Pancreas (tissue), 10 donors: ENCODE measurements at regions of chr5 and their contacts with region 1.

Region 1: DNA sequence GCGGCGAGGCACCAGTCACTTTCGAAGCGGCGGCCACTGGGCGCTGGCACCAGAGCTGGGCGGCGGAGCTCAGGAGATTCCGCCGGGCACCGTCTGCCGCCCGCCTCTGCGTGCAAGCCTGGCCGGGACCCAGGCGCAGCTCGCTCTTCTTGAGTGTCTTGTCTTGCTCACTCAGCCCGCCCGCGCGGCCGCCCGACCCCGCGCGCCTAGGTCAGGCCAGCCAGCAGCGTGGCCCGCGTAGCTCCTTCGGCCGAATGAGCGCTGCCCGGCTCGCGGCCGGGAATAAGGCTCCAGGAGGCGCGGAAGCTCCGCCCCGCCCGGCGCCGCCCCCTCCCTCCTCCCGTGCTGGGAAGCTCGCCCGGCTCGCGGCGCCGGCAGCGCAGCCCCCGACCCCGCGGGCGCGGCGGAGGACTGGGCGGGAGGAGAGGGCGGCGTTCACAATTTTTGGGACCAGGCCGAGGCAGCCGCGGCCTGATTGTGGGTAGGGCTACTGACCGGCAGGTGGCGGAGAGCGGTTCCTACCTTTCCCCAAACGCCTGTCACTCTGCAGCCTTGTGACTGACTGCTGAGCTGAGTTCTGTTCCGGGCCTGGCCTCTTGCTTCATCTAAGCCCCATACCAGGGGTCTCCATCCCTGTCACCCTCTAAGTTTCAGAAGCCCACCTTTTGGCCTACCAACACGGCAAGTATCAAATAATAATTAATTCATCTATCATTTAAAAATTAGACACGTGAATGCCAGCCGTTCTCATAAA is at the start of gene HBEGF:
- DNase-seq: peak; percentile 83 to 95 (median 91)
- ATAC-seq: peak; percentile 87 to 92 (median 90)
- H3K4me3 ChIP-seq: peak within 1 kb of the TSS; percentile 55 to 79 (median 63)
- H3K27ac ChIP-seq: peak within 1 kb of the TSS; percentile 53 to 76 (median 68)
- H3K4me1 ChIP-seq: peaks cover 0 to 18% (median 16%) of the 10 kb centered on the region in 3 donors
- H3K27me3 ChIP-seq: no peaks in the 10 kb centered on the region
- CTCF ChIP-seq: peak; percentile 17 to 55 (median 43)
- total RNA-seq, gene HBEGF: 0.97 to 5.0 (median 1.7) TPM

Region 2: DNA sequence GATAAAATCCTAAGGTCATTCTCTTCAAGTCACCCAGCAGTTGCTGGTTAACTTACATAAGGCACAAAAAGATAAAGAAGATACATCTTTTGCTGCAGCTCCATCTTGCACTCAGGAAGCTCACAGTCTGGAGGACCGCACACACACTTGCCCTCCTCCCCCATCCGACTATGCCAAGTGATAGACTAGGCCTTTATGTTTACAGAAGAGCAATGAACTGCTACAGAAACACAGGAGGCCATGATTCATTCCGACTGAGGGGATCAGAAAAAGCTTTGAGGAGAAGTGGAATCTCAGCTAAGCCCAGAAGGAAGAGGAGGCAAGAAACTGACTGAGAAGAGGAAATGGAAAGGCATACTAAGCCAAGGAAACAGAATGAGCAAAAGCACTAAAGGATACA is 320.8 kb before region 1 on chr5:
- intact Hi-C with region 1: no loop called
- DNase-seq: no peak
- ATAC-seq: no peak
- H3K4me3 ChIP-seq: no peak overlapping the region
- H3K27ac ChIP-seq: no peak overlapping the region
- H3K4me1 ChIP-seq: peaks cover 3 to 14% (median 11%) of the 10 kb centered on the region in 3 donors
- H3K27me3 ChIP-seq: no peaks in the 10 kb centered on the region
- CTCF ChIP-seq: no peak

Region 3: GRCh38 chr5:140174465-140175366 is 171.8 kb before region 1 on chr5 and contains the start of gene CYSTM1:
- intact Hi-C with region 1: loop called in 1 of 3 experiments (anchors 5 kb)
- DNase-seq: peak; percentile 96 to 99 (median 99)
- ATAC-seq: peak; percentile 86 to 94 (median 90)
- H3K4me3 ChIP-seq: peak within 1 kb of the TSS; percentile 78 to 98 (median 97)
- H3K27ac ChIP-seq: peak within 1 kb of the TSS; percentile 99 to 100 (median 100)
- H3K4me1 ChIP-seq: peaks cover 5 to 26% (median 23%) of the 10 kb centered on the region in 3 donors
- H3K27me3 ChIP-seq: no peaks in the 10 kb centered on the region
- CTCF ChIP-seq: no peak
- total RNA-seq, gene CYSTM1: 30.2 to 66.2 (median 44.9) TPM

Region 4: GRCh38 chr5:140244525-140245025 is 102.0 kb before region 1 on chr5:
- intact Hi-C with region 1: loop called in 2 of 3 experiments (anchors 5 kb)
- DNase-seq: peak; percentile 86 to 96 (median 92)
- ATAC-seq: peak; percentile 75 to 86 (median 80)
- H3K4me3 ChIP-seq: no peak overlapping the region
- H3K27ac ChIP-seq: no peak overlapping the region
- H3K4me1 ChIP-seq: peaks cover 24 to 38% (median 29%) of the 10 kb centered on the region in 3 donors
- H3K27me3 ChIP-seq: no peaks in the 10 kb centered on the region
- CTCF ChIP-seq: peak; percentile 76 to 81 (median 77)

Region 5: GRCh38 chr5:140273401-140273877 is 73.1 kb before region 1 on chr5:
- intact Hi-C with region 1: no loop called
- DNase-seq: peak in 1 of 6 donors; percentile 25
- ATAC-seq: peak in 3 of 4 donors; percentile 31 to 80 (median 69)
- H3K4me3 ChIP-seq: no peak overlapping the region
- H3K27ac ChIP-seq: no peak overlapping the region
- H3K4me1 ChIP-seq: no peaks in the 10 kb centered on the region
- H3K27me3 ChIP-seq: no peaks in the 10 kb centered on the region
- CTCF ChIP-seq: no peak